Ascending aorta (tissue), 2 donors: ENCODE measurements at regions of chr19 and their contacts with region 1.

Region 1: DNA sequence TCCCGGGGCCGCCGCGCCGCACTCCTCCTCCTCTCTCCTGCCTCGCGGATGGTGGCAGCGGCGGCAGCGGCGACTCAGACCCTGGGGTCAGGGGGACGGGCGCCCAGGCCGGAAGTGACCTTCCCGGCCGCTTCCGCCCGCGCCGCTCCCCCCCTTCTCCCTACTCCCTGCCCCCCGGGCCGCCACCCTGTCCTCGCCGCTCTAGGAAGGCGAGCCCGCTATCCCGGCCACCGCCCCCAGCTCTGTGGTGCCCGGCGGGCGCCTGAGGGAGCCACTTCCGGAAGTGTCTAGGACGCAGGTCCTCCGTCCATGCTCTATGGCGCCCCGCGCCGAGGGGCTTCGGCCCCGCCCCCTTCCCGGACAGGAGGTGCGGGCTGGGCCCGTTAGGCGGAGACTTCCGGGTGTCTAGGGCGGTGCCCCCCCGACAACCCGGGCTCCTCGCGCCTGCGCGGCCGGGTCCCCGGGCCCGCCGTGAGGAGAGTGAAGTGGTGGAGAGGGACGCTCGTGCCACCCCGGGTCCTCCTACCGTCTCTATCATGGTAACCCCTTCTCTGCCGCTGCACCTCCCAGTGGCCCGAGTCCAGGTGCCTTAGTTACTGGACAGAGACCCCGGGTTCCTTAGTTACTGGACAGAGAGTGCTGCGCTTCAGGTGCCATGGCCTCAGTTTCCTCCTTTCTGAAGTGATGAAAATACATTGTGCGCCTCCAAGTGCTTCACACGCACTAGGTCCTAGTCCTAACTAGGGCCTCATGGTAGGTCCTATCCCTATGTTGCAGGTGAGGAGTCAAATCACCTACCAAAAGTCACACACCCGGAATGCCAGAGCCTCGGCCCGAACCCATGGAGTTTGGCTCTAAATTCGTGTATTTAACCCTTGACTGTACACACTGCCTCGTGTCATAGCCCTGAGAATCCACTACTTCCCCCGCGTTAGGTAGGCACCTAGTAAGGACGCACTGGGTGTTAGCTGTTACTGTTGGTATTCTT is at the start of gene ZNF787:
- DNase-seq: peak; percentile 95 to 100
- H3K4me3 ChIP-seq: peak within 1 kb of the TSS; percentile 93 to 99
- H3K27ac ChIP-seq: peak within 1 kb of the TSS; percentile 89 to 99
- H3K4me1 ChIP-seq: peaks cover 13 to 23% of the 10 kb centered on the region in 2 donors
- H3K27me3 ChIP-seq: no peaks in the 10 kb centered on the region
- CTCF ChIP-seq: no peak
- total RNA-seq, gene ZNF787: 18.1 TPM

Region 2: GRCh38 chr19:56105090-56105701 is 16.3 kb before region 1 on chr19:
- intact Hi-C with region 1: loop called (anchors 1 kb)
- DNase-seq: peak in 1 of 2 donors; percentile 86
- H3K4me3 ChIP-seq: peak overlapping the region; percentile 39 to 47
- H3K27ac ChIP-seq: peak overlapping the region; percentile 53 to 56
- H3K4me1 ChIP-seq: peaks cover 12 to 32% of the 10 kb centered on the region in 2 donors
- H3K27me3 ChIP-seq: no peaks in the 10 kb centered on the region
- CTCF ChIP-seq: peak; percentile 65 to 81 (median 81)

Region 3: DNA sequence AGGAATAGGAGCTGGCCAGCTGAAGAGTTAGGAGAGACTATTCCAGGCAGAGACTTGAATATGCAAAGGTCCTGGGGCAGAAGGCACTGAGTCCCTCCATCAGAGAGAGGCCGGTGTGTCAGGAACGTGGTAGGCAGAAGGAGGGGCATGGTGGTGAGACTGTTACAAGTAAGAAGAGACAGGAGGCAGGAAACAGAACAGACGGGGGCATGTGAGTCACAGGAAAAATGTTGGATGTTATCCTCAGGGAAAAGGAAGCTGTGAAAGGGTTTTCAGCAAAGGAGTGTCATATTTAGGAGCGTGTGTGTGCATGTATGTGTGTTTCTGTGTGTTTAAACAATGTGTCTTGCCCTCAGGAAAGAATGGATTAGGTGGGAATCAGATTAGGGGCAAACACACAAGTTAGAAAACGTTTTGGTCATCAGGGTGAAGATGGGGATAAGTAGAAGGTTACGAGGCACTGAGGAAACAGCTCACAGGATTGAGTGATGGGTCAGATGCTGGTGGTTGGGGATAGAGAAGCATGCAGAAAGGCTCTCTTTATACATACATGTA is 152.2 kb after region 1 on chr19:
- intact Hi-C with region 1: no loop called
- DNase-seq: no peak
- H3K4me3 ChIP-seq: no peak overlapping the region
- H3K27ac ChIP-seq: no peak overlapping the region
- H3K4me1 ChIP-seq: no peaks in the 10 kb centered on the region
- H3K27me3 ChIP-seq: no peaks in the 10 kb centered on the region
- CTCF ChIP-seq: no peak